Upper lobe of right lung (tissue), 1 donor: ENCODE measurements at regions of chr1 and their contacts with region 1.

Region 1: DNA sequence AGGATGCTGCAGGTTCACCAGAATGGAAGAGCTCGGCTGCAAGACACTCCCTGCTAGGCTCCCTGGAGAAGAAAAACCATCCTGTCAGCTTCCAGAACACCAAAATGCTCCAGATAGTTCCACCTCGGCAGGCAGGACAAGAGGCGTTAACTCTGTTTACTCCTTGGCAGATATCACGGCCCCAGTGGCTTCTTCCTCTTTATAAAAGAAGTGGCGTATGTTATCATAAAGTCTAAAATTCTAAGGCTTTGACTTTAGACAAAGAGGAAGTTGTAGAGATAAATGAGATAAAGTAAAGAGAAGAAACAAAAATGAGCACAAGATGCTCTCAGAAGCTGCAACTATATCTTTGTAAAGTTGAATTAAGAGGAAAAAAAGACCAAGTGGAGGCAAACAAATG is 24.3 kb upstream of the MTF1 start:
- DNase-seq: no peak
- ATAC-seq: no peak
- H3K4me3 ChIP-seq: no peak overlapping the region
- H3K27ac ChIP-seq: no peak overlapping the region
- H3K4me1 ChIP-seq: no peaks in the 10 kb centered on the region
- H3K27me3 ChIP-seq: no peaks in the 10 kb centered on the region
- CTCF ChIP-seq: no peak

Region 2: DNA sequence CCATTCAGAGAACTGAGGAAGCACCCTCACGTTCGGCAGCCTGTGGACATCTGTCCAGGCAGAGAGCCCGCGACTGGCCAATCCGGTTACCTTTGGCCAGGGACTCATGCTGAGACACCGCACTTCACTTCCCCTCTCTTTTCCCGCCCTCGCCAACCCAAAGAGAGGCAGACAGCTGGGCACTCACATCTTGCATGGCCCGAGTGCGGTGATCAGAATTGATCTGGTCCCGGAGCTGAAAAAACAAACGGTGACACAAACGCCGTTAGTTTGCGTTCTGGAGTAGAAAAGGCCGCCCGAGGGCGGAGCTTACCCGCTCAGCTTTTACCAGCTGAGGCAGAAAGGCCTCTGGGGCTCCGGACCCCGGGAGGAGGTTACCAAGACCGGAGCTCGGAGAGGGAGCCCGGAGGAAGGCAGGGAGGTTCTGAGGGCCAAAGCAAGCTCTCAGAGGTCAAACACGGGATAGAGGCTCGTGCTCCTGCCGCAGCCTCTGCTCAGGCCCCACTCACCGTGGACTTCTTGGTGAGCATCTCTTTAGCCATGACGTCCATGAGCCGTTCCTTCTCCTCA is 105.8 kb after region 1 on chr1:
- intact Hi-C with region 1: loop called (anchors 10 kb)
- DNase-seq: peak; percentile 76
- ATAC-seq: peak; percentile 51
- H3K4me3 ChIP-seq: peak overlapping the region; percentile 100
- H3K27ac ChIP-seq: peak overlapping the region; percentile 82
- H3K4me1 ChIP-seq: peaks cover 16% of the 10 kb centered on the region
- H3K27me3 ChIP-seq: no peaks in the 10 kb centered on the region
- CTCF ChIP-seq: no peak